PC-3 (cell line): ENCODE measurements at regions of chr20 and their contacts with region 1.

Region 1: GRCh38 chr20:20130399-20130798 is 78.1 kb downstream of the CFAP61 start:
- DNase-seq: peak; percentile 71
- ATAC-seq: peak; percentile 74
- H3K4me3 ChIP-seq: no peak overlapping the region
- H3K27ac ChIP-seq: no peak overlapping the region
- H3K4me1 ChIP-seq: no peaks in the 10 kb centered on the region
- H3K27me3 ChIP-seq: no peaks in the 10 kb centered on the region; the same call in 1 of the 2 replicates
- CTCF ChIP-seq: peak; percentile 84

Region 2: GRCh38 chr20:20407891-20408805 is 277.7 kb after region 1 on chr20:
- CTCF ChIA-PET with region 1: no interaction called
- POLR2A ChIA-PET with region 1: no interaction called
- intact Hi-C with region 1: loop called (anchors 1 kb)
- DNase-seq: peak; percentile 61
- ATAC-seq: peak; percentile 89
- H3K4me3 ChIP-seq: no peak overlapping the region
- H3K27ac ChIP-seq: no peak overlapping the region
- H3K4me1 ChIP-seq: no peaks in the 10 kb centered on the region
- H3K27me3 ChIP-seq: no peaks in the 10 kb centered on the region
- CTCF ChIP-seq: peak; percentile 79

Region 3: DNA sequence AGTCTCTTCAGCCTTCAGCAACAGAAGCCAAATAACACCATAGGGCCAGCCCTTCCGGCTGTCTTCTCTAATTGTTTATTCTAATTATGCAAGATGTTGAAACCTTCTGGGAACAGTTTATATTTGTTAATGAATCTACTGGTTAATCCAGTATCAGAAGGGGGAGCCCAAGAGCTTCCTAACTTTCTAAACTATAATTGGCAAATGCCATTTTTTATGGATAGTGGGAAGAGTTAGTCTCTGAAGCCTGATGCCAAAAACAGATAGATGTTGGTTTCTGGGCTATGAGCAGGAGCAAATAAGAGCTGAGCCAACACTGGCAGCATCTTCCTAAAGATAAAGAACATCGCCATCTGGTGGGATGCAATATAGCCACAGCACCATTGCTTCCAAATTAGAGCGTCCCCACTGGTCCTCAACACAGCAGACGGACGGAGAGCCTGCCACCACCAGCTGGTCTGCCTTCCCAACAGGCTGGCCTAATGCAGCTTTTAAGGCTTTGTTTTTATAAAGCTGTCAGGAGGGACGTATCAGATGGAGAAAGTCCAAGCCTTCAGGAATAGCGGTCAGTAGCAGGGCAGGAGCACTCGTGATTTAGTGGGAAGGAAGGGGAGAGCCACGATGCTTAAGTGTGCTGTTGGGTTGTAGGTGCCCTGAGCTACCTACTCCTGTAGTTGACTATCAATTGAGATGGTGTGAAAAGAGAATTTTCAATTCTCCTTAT is 463.2 kb after region 1 on chr20:
- CTCF ChIA-PET with region 1: no interaction called
- POLR2A ChIA-PET with region 1: no interaction called
- intact Hi-C with region 1: loop called (anchors 5 kb)
- DNase-seq: peak; percentile 62
- ATAC-seq: peak; percentile 81
- H3K4me3 ChIP-seq: no peak overlapping the region
- H3K27ac ChIP-seq: no peak overlapping the region
- H3K4me1 ChIP-seq: no peaks in the 10 kb centered on the region
- H3K27me3 ChIP-seq: no peaks in the 10 kb centered on the region
- CTCF ChIP-seq: peak; percentile 86